AG04450 (cell line): ENCODE measurements at regions of chr14 and their contacts with region 1.

Region 1: DNA sequence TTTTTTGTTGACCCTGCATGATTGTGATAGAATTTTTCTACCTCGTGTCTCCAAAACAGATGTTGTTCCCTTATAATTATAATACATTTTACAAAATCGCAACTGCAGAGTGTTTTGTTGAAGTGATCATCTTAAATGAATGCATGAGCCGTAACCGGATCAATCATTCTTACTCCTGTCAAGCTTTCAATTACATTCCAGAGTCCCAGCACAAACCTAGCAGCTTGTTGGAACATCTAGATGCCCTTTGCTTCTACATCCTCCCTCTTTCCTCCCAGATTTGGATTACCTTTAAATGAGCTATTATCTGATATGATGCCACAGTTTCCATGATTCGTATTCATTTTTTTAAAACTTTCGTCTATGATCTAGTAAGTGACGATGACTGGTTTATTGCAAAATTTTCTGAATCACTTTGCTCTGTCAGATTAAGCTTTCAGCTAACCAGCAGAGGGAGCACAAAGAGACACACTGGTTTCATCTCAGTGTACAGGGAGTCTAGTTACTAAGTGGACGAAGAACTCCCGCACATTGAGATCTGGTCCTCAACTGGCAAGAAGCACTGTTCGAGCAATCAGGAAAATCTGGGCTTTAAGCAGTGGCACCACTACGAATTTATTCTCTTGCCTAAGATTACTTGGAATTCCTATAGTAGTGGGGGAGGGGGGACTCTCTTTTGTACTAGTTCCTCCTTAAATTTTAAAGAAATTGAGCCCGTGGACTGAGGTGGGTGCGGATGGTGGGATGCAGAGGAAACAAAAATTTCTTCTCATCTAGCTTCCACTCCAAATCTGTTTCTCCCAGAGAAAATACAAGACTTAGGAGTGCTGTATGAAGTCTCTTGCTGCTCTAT is 40.9 kb downstream of the TSHR start:
- DNase-seq: peak; percentile 64
- H3K4me3 ChIP-seq: no peak overlapping the region
- H3K27ac ChIP-seq: no peak overlapping the region
- H3K27me3 ChIP-seq: peaks cover 2% of the 10 kb centered on the region
- CTCF ChIP-seq: peak; percentile 89

Region 2: DNA sequence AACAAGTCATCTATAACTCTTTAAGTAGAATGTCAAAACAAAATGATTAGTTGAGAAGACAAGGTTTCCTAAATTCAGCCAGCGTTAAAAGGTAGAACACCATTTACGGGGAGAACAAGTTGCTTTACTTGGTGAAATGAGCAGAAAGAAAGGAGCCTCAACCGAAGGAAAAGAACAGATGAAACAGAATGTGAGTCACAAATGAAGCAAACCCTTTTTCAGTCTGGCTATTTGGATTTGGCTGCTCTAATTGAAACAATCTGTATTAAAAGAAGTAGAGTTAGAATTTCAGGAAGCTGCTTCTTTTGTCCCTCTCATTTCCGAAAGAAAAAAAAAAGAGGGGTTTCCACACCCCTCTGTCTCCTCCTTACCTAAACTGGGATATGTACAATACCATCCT is 89.3 kb before region 1 on chr14:
- CTCF ChIA-PET with region 1: no interaction called
- POLR2A ChIA-PET with region 1: no interaction called
- DNase-seq: no peak
- H3K4me3 ChIP-seq: no peak overlapping the region
- H3K27ac ChIP-seq: no peak overlapping the region
- H3K27me3 ChIP-seq: no peaks in the 10 kb centered on the region
- CTCF ChIP-seq: no peak

Region 3: GRCh38 chr14:80973931-80974641 is 22.2 kb before region 1 on chr14:
- CTCF ChIA-PET with region 1: interaction called, 11 read pairs
- POLR2A ChIA-PET with region 1: no interaction called
- DNase-seq: no peak
- H3K4me3 ChIP-seq: no peak overlapping the region
- H3K27ac ChIP-seq: no peak overlapping the region
- H3K27me3 ChIP-seq: peaks cover 4% of the 10 kb centered on the region
- CTCF ChIP-seq: no peak

Region 4: GRCh38 chr14:81164167-81164774 is 168.0 kb after region 1 on chr14:
- CTCF ChIA-PET with region 1: interaction called, 85 read pairs
- POLR2A ChIA-PET with region 1: no interaction called
- DNase-seq: peak; percentile 15
- H3K4me3 ChIP-seq: no peak overlapping the region
- H3K27ac ChIP-seq: no peak overlapping the region
- H3K27me3 ChIP-seq: no peaks in the 10 kb centered on the region
- CTCF ChIP-seq: peak; percentile 67

Region 5: DNA sequence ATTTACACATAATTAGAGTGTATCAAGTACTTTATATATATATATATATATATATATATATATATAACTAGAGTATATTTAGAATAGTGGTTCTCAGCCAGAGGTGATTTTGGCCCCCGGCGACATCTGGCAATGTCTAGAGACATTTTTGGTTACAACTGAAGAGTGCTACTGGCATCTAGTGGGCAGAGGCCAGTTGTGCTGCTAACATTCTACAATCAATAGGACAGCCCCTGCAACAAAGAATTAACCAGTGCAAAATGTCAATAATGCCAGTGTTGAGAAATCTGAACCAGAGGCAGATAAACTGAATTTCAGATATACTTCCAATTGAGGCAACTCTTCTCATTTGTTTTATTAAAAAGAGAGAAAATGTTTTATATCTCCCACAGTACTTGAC is 215.6 kb after region 1 on chr14:
- CTCF ChIA-PET with region 1: interaction called, 16 read pairs
- POLR2A ChIA-PET with region 1: no interaction called
- DNase-seq: no peak
- H3K4me3 ChIP-seq: no peak overlapping the region
- H3K27ac ChIP-seq: no peak overlapping the region
- H3K27me3 ChIP-seq: no peaks in the 10 kb centered on the region
- CTCF ChIP-seq: peak; percentile 41

Region 6: DNA sequence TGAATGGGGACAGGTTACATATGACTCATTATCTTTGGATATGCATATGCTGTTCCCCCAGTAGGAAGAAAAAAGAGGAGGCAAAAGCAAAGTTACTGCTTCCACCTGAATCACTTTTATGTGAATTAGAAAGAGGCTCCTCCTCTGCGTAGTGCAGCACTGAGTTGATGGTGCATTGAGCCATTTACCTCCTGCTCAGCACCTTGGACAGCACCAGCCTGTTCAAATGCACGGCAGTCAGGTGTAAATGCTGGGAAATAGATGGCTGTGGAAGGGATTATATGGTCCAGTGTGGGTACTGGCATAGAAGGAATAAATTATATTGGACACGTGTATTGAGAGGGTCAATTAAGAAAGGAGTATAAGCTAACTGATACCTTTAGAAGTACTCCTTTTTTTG is 1079.3 kb after region 1 on chr14:
- CTCF ChIA-PET with region 1: no interaction called
- POLR2A ChIA-PET with region 1: no interaction called
- DNase-seq: no peak
- H3K4me3 ChIP-seq: no peak overlapping the region
- H3K27ac ChIP-seq: no peak overlapping the region
- H3K27me3 ChIP-seq: no peaks in the 10 kb centered on the region
- CTCF ChIP-seq: no peak